Right lobe of liver (tissue), 6 donors: ENCODE measurements at regions of chr9 and their contacts with region 1.

Region 1: DNA sequence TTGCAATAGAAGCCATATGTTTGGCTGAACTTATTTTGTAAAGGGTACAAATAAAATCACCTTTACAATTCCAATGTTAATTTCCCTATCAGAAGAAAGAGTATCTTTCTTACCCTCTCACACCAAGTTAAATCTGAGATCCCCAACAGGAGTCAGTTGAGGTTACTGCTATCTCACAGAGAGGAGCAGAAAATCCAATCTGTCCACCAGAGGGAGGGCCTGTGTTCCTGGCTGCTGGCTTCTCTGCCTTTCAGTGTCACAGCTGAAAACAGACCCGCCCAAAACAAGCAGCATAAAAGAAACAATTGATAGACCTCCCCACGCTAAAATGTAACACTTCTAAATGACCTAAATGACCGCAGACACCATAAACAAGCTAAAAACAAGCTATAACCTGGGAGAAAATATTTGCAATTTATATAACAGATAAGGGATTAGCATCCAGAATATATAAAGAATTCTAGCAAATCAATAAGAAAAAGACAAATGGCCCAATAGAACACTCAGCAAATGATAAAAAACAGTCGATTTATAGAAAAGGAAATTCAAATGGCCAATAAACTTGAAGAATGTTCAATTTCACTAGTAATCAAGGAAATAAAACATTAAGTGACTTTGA is 24.5 kb upstream of the MVB12B start:
- DNase-seq: peak in 1 of 3 donors; percentile 58
- ATAC-seq: peak; percentile 86 to 95 (median 91)
- H3K4me3 ChIP-seq: no peak overlapping the region
- H3K27ac ChIP-seq: no peak overlapping the region
- H3K4me1 ChIP-seq: no peaks in the 10 kb centered on the region
- H3K27me3 ChIP-seq: no peaks in the 10 kb centered on the region
- CTCF ChIP-seq: peak; percentile 68 to 78 (median 72)
- POLR2A ChIP-seq: no peak

Region 2: GRCh38 chr9:126055381-126055985 is 246.6 kb before region 1 on chr9:
- intact Hi-C with region 1: no loop called
- DNase-seq: peak in 1 of 3 donors; percentile 20
- ATAC-seq: no peak
- H3K4me3 ChIP-seq: no peak overlapping the region
- H3K27ac ChIP-seq: no peak overlapping the region
- H3K4me1 ChIP-seq: no peaks in the 10 kb centered on the region
- H3K27me3 ChIP-seq: no peaks in the 10 kb centered on the region
- CTCF ChIP-seq: no peak
- POLR2A ChIP-seq: no peak

Region 3: GRCh38 chr9:126146254-126147145 is 155.6 kb before region 1 on chr9:
- intact Hi-C with region 1: no loop called
- DNase-seq: peak in 2 of 3 donors; percentile 42 to 43
- ATAC-seq: peak; percentile 49 to 75 (median 60)
- H3K4me3 ChIP-seq: no peak overlapping the region
- H3K27ac ChIP-seq: peak overlapping the region in 1 of 3 donors; percentile 51
- H3K4me1 ChIP-seq: peaks cover 0 to 18% (median 8%) of the 10 kb centered on the region in 4 donors
- H3K27me3 ChIP-seq: no peaks in the 10 kb centered on the region
- CTCF ChIP-seq: peak; percentile 36 to 45 (median 38)
- POLR2A ChIP-seq: no peak

Region 4: DNA sequence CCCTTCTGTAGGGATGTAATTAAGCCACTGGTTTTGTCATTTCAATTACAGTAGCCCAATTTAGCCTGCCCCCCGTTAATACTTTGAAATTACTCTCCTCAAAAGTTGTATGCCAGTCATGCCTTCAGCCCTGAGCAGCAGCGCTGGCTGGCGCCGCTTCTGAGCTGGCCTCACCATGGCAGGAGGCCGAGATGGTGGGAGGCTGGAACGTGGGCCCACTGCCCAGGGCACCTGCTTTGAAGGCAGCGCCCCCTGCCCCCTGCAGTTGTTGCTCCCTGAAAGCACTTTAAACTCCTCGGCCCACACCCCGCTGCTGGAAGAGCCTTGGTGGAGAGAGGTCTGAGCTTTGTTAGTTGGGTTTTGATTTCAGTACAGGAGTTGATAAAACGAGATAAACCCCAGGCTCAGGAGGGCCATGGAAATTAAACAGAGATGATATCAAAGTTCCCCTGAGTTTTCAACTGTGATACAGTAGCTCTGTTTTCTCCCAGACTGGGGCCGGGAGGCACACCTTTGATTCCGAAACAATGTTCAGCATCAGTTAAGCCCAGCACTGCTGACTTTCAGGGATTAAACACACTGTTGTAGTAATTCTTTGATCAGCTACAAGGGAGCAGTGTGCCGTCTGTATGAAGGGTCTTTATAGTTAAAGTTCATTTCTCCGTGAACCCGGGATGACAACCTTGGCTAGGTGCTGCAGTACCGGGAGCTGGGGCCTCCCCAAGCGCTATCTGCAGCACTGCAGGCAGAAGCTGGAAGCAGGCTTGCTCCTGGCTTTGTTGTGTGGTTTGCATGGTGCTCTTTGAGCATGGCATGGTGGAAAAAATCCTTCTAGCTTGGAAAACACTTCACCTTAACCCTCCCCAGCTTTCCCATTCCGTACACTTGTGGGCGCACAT is 34.0 kb after region 1 on chr9:
- intact Hi-C with region 1: no loop called
- DNase-seq: peak in 2 of 3 donors; percentile 51 to 64
- ATAC-seq: peak; percentile 31 to 55 (median 47)
- H3K4me3 ChIP-seq: peak overlapping the region; percentile 15 to 51 (median 48)
- H3K27ac ChIP-seq: peak overlapping the region; percentile 72 to 86 (median 74)
- H3K4me1 ChIP-seq: peaks cover 0 to 35% (median 5%) of the 10 kb centered on the region in 4 donors
- H3K27me3 ChIP-seq: no peaks in the 10 kb centered on the region
- CTCF ChIP-seq: peak in 1 of 4 donors; percentile 6
- POLR2A ChIP-seq: no peak

Region 5: DNA sequence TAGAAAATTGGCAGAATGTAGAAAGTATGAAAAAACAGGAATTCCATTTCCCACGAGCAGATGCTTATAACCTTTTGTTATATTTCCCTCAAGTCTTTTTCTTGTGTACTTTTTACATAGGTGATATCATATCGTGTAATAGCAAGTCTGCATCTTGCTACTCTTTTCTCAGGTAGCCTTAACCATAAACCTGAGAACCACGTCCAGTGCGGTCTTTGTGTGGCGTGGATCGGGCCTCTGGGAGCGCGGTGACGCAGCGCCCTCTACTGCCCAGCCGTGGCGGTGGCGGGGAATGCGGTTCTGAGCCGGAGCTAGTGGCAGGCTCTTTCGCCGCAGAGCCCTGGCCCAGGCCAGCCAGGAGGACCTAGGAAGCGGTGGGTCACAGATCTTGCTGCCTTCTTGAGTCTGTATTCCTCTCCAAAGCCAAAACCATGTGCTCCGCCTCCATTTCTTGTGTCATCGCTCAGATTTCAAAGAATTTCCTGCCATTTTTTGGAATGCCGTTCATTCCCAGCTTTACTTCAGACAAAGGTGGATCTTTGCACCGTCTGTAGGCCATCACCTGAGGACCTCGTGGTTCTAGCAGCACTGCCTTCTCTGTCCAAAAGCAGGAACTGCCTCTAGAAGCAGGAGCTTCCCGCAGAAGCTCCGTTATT is 96.4 kb after region 1 on chr9:
- intact Hi-C with region 1: loop called in 1 of 2 experiments (anchors 10 kb)
- DNase-seq: peak; percentile 77 to 83 (median 79)
- ATAC-seq: peak; percentile 82 to 89 (median 86)
- H3K4me3 ChIP-seq: no peak overlapping the region
- H3K27ac ChIP-seq: no peak overlapping the region
- H3K4me1 ChIP-seq: peaks cover 0 to 19% (median 8%) of the 10 kb centered on the region in 4 donors
- H3K27me3 ChIP-seq: no peaks in the 10 kb centered on the region
- CTCF ChIP-seq: peak; percentile 93 to 97 (median 96)
- POLR2A ChIP-seq: no peak

Region 6: GRCh38 chr9:126482361-126483044 is 180.4 kb after region 1 on chr9:
- intact Hi-C with region 1: loop called in 1 of 2 experiments (anchors 10 kb)
- DNase-seq: no peak
- ATAC-seq: no peak
- H3K4me3 ChIP-seq: no peak overlapping the region
- H3K27ac ChIP-seq: no peak overlapping the region
- H3K4me1 ChIP-seq: no peaks in the 10 kb centered on the region
- H3K27me3 ChIP-seq: no peaks in the 10 kb centered on the region
- CTCF ChIP-seq: no peak
- POLR2A ChIP-seq: no peak